Colonic mucosa (tissue), 4 donors: ENCODE measurements at regions of chr17 and their contacts with region 1.

Region 1: DNA sequence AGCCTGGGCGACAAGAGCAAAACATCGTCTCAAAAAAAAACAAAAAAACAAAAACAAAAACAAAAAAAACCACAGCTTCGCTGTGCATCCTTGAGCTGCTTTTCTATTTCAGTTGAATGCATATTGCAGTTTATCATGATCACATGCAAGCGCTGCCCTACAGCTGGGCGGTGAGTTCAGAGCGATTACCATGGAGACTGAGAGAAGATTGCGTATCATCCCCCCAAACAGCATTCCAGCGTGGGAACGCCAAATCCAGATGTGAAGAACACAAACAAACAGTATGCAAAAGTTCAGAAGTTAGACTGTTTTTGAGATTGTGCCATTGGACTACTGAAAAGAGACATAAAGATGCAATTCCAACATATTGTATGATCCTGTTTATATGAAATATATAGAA is 15.1 kb upstream of the SLC52A1 start:
- DNase-seq: no peak
- H3K4me3 ChIP-seq: no peak overlapping the region
- H3K27ac ChIP-seq: peak overlapping the region; percentile 46
- H3K4me1 ChIP-seq: no peaks in the 10 kb centered on the region
- H3K27me3 ChIP-seq: no peaks in the 10 kb centered on the region
- CTCF ChIP-seq: no peak

Region 2: GRCh38 chr17:4913994-4914393 is 136.3 kb before region 1 on chr17:
- intact Hi-C with region 1: loop called (anchors 10 kb)
- DNase-seq: no peak
- H3K4me3 ChIP-seq: no peak overlapping the region
- H3K27ac ChIP-seq: no peak overlapping the region
- H3K4me1 ChIP-seq: no peaks in the 10 kb centered on the region
- H3K27me3 ChIP-seq: no peaks in the 10 kb centered on the region
- CTCF ChIP-seq: no peak

Region 3: GRCh38 chr17:5019475-5019956 is 30.8 kb before region 1 on chr17:
- intact Hi-C with region 1: no loop called
- DNase-seq: no peak
- H3K4me3 ChIP-seq: no peak overlapping the region
- H3K27ac ChIP-seq: no peak overlapping the region
- H3K4me1 ChIP-seq: no peaks in the 10 kb centered on the region
- H3K27me3 ChIP-seq: no peaks in the 10 kb centered on the region
- CTCF ChIP-seq: no peak